ENCODE measurements at regions of chr6 and their contacts with region 1.

Region 1: DNA sequence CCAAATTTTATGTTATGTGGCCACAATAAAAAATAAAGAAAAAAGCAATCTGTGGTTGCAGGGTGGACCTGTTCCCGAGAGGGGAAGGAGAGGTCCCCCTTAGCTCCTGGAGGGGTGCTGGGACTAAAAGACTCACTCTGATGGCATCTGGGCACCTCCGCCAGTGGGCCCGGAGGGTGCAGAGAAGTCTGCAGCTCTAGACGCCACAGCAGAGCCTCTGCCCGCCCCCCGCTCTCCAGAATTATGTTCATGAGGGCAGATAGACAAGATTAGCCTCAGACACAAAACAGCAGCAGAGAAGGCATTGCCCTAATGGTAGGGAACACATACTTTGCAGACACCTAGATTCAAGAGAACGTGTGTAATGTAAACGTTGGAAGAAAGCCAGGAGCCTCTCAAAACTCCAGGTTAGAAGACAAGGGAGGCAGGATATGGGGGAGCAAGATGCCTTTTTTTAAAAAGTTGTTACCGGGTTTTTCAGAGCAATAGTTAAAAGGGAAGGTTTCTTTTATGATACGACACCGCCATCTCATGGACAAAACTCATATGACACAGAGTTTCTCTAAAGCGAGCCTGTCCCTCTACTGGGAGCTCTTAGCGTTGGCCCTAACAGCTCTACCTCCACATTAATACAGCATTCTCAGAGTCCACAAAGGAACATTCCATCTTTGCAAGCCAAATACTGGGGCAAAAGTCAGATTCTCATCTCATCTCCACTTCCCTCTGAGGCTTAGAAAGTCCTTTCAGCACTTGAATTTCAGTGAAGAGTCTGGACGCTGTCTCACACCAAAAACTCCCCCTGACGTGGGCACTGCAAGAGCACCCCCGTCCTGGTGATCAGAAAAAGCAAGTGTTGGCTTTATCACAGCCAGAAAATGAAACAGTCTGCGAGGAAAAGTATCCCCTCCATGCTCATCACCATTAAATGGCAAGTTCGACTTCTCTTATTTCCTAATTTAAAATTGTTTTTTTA is 47.2 kb downstream of the FOXF2 start:
- DNase-seq: peak; percentile 70
- H3K4me3 ChIP-seq: no peak overlapping the region
- H3K27ac ChIP-seq: no peak overlapping the region
- H3K4me1 ChIP-seq: no peaks in the 10 kb centered on the region
- H3K27me3 ChIP-seq: no peaks in the 10 kb centered on the region
- CTCF ChIP-seq: peak; percentile 56 to 67
- POLR2A ChIP-seq: no peak

Region 2: GRCh38 chr6:797479-798077 is 639.0 kb before region 1 on chr6:
- CTCF ChIA-PET with region 1: interaction called, 26 read pairs
- POLR2A ChIA-PET with region 1: no interaction called
- dilution Hi-C with region 1: no loop called
- intact Hi-C with region 1: loop called (anchors 2 kb)
- DNase-seq: peak; percentile 65
- H3K4me3 ChIP-seq: no peak overlapping the region
- H3K27ac ChIP-seq: no peak overlapping the region
- H3K4me1 ChIP-seq: no peaks in the 10 kb centered on the region
- H3K27me3 ChIP-seq: peaks cover 3 to 16% of the 10 kb centered on the region in 2 experiments
- CTCF ChIP-seq: peak; percentile 55 to 61
- POLR2A ChIP-seq: no peak

Region 3: GRCh38 chr6:1424306-1424928 is 12.2 kb before region 1 on chr6:
- CTCF ChIA-PET with region 1: interaction called, 46 read pairs
- POLR2A ChIA-PET with region 1: no interaction called
- dilution Hi-C with region 1: no loop called
- intact Hi-C with region 1: no loop called
- DNase-seq: peak; percentile 45
- H3K4me3 ChIP-seq: no peak overlapping the region
- H3K27ac ChIP-seq: no peak overlapping the region
- H3K4me1 ChIP-seq: no peaks in the 10 kb centered on the region
- H3K27me3 ChIP-seq: no peaks in the 10 kb centered on the region
- CTCF ChIP-seq: peak; percentile 47 to 71
- POLR2A ChIP-seq: no peak